ENCODE measurements at regions of chr19 and their contacts with region 1.

Region 1: GRCh38 chr19:51815043-51815442 is 20.1 kb downstream of the FPR3 start:
- DNase-seq: no peak
- ATAC-seq: peak in 1 of 2 donors; percentile 33

Region 2: GRCh38 chr19:51760697-51761356 is 54.2 kb before region 1 on chr19 and contains the start of gene FPR2:
- intact Hi-C with region 1: no loop called
- DNase-seq: no peak
- ATAC-seq: no peak
- total RNA-seq, gene FPR2: 1.1 to 2.4 TPM

Region 3: DNA sequence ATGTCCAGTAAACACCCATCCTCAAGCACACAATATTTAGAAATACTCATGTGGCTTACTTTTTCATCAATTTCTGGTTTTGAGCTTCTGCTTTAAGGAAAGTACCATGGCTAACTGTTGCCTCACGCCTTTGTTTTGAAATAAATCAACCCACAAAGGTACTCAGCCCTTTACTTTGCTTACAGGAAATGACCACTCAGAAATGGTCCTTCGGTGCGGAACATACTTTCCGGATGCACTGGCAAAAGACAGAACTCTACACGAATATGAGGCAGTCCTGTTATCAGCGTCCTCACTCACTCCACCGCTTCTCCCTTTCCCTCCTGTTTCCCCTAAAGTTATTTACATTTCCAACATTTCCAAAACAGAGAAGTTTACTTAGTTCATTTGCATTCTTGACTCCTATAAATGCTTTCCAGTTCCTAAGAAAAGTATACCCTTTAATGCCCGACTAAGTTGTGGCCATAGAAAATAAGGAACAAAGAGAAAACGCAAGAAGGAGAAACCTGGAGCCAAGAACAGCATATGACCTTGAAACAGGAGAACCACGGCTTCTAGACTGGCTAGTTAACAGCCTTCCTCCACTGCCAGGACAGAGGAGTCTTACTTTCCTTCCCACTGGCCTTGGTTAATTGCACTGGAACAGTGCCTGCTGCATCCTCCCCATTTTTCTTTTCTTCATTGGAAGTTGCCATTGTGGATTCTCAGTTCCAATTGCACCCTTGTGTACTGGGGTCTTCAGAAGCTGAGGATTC is 43.5 kb before region 1 on chr19:
- intact Hi-C with region 1: loop called in 1 of 2 experiments (anchors 5 kb)
- DNase-seq: no peak
- ATAC-seq: peak in 1 of 2 donors; percentile 69

Region 4: DNA sequence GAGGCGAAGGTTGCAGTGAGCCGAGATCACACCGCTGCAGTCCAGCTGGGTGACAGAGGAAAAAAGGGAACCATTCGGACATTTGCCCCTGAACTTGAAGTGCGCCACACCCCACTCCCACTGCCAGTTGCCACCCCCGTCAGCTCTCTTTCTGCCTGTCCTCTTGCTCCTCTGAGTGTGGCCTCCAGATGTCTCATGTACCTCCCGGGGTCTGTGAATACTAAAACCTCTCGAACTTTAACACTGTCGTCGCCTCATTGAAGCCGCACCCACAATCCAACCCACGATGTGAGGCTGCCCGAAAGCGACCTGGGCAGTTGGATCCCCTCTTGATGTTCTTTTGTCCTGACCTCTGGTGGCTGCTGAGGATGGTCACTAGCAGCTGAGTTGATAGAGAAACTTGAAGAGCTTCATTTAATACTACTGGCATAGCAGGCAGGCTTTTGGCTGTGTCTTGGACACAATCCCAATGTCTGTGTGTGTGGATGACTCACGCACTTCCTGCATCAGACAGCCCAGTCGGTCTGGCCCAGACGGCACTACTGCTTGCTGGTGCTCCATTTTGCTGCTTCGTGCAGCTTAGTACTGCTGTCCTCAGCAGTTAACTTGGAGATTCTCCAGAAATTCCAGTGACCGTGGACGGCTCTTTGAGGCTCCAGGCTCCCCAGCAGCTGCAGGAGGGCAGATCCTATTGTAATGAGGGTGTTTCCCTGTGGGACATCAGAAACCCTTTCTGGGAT is 15.8 kb before region 1 on chr19:
- intact Hi-C with region 1: no loop called
- DNase-seq: peak; percentile 93
- ATAC-seq: peak; percentile 94 to 96

Measured in left cardiac atrium (tissue), 4 donors.